Activated naive CD4-positive, alpha-beta T cell treated with anti-CD3 and anti-CD28 coated beads for 36 hours (primary cell): ENCODE measurements at regions of chr15 and their contacts with region 1.

Region 1: DNA sequence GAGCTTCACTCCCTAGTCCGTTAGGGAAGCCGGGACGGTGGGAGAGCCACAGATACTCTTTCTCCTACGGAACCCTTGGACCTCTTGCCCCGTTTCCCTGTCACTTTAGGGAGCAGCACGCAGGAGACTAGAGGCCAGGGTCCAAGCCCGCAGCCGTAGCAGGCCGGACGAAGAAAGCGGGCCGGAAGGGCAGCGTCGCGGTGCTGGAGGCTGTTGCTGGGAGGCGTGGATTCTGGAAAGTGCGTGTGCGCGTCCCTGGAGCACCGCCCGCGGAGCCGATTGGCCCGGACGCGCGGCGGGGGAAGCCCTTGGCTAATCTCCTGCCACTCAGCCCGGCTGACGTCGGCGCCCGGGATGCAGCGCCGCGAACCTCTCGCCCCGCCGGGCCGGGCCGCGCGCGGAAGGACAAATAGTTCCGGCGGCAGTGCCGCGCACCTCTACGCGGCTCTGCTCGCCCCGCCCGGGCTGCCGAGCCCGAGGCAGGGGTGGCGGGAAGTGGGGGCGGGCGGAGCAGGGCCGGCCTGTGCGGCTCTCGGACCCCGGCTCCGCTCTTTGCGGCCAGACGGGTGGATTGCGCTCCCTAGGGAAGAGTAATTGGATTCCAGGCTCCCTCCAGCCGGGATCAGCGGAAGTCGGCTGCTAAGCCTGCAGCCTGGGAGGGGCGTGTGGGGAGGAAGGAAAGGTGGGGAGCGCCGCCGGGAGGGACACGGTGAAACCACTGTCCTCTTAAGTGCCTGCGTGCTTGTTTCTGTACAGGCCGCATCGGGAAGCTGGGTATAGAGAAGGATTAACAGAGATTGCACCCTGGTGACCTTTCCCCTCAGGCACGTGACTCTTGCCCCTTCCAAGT is 31.3 kb upstream of the TCF12 start:
- DNase-seq: peak; percentile 84
- H3K4me3 Mint-ChIP-seq: peak overlapping the region; percentile 76
- H3K27ac Mint-ChIP-seq: peak overlapping the region; percentile 78
- H3K4me1 Mint-ChIP-seq: peaks cover 20% of the 10 kb centered on the region
- H3K27me3 Mint-ChIP-seq: no peaks in the 10 kb centered on the region

Region 2: GRCh38 chr15:57003418-57003817 is 116.3 kb after region 1 on chr15:
- CTCF ChIA-PET with region 1: no interaction called
- intact Hi-C with region 1: no loop called
- DNase-seq: no peak
- H3K4me3 Mint-ChIP-seq: no peak overlapping the region
- H3K27ac Mint-ChIP-seq: no peak overlapping the region
- H3K4me1 Mint-ChIP-seq: peaks cover 26% of the 10 kb centered on the region
- H3K27me3 Mint-ChIP-seq: no peaks in the 10 kb centered on the region

Region 3: GRCh38 chr15:57138349-57138788 is 251.2 kb after region 1 on chr15:
- CTCF ChIA-PET with region 1: no interaction called
- intact Hi-C with region 1: loop called (anchors 10 kb)
- DNase-seq: no peak
- H3K4me3 Mint-ChIP-seq: no peak overlapping the region
- H3K27ac Mint-ChIP-seq: no peak overlapping the region
- H3K4me1 Mint-ChIP-seq: peaks cover 18% of the 10 kb centered on the region
- H3K27me3 Mint-ChIP-seq: no peaks in the 10 kb centered on the region